ENCODE measurements at regions of chr1 and their contacts with region 1.

Region 1: GRCh38 chr1:202625416-202626360 is 84.6 kb downstream of the SYT2 start:
- DNase-seq: peak; percentile 63 to 79
- ATAC-seq: peak; percentile 71 to 87 (median 80)
- H3K4me3 ChIP-seq: no peak overlapping the region
- H3K27ac ChIP-seq: peak overlapping the region in 1 of 10 donors; percentile 30
- H3K4me1 ChIP-seq: peaks cover 2 to 38% (median 29%) of the 10 kb centered on the region in 9 donors
- H3K27me3 ChIP-seq: peaks cover 0 to 70% (median 2%) of the 10 kb centered on the region in 7 donors
- CTCF ChIP-seq: peak; percentile 53 to 83 (median 72)

Region 2: GRCh38 chr1:201807958-201808632 is 817.6 kb before region 1 on chr1:
- intact Hi-C with region 1: no loop called
- DNase-seq: peak; percentile 61 to 68
- ATAC-seq: peak in 7 of 8 donors; percentile 35 to 80 (median 66)
- H3K4me3 ChIP-seq: no peak overlapping the region
- H3K27ac ChIP-seq: peak overlapping the region in 7 of 10 donors; percentile 4 to 41 (median 20)
- H3K4me1 ChIP-seq: peaks cover 0 to 13% (median 3%) of the 10 kb centered on the region in 9 donors
- H3K27me3 ChIP-seq: no peaks in the 10 kb centered on the region
- CTCF ChIP-seq: no peak

Region 3: DNA sequence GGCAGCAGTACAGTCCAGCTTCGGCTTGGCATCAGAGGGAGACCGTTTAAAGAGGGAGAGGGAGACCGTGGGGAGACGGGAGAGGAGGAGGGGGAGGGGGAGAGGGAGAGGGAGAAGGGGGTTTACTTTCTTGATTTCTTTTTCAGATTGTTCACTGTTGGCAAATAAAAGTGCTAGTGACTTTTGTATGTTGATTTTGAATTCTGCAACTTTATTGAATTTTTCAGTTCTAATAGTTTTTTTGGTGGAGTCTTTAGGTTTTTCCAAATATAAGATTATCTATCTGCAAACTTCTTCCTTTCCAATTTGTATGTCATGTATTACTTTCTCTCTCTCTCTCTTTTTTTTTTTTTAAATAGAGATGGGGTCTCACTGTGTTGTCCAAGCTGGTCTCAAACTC is 173.2 kb before region 1 on chr1:
- intact Hi-C with region 1: no loop called
- DNase-seq: no peak
- ATAC-seq: no peak
- H3K4me3 ChIP-seq: peak overlapping the region in 5 of 10 donors; percentile 5 to 37 (median 26)
- H3K27ac ChIP-seq: peak overlapping the region in 6 of 10 donors; percentile 10 to 68 (median 51)
- H3K4me1 ChIP-seq: peaks cover 0 to 5% (median 0%) of the 10 kb centered on the region in 9 donors
- H3K27me3 ChIP-seq: no peaks in the 10 kb centered on the region
- CTCF ChIP-seq: no peak

Region 4: GRCh38 chr1:202589190-202590030 is 36.3 kb before region 1 on chr1:
- intact Hi-C with region 1: loop called in 1 of 10 experiments (anchors 5 kb)
- DNase-seq: peak; percentile 81 to 94
- ATAC-seq: peak; percentile 85 to 95 (median 93)
- H3K4me3 ChIP-seq: no peak overlapping the region
- H3K27ac ChIP-seq: peak overlapping the region; percentile 78 to 96 (median 90)
- H3K4me1 ChIP-seq: peaks cover 34 to 99% (median 80%) of the 10 kb centered on the region in 9 donors
- H3K27me3 ChIP-seq: peaks cover 0 to 67% (median 0%) of the 10 kb centered on the region in 7 donors
- CTCF ChIP-seq: peak in 2 of 9 donors; percentile 23 to 34

Measured in heart right ventricle (tissue), 16 donors.